ENCODE measurements at regions of chr21 and their contacts with region 1.

Region 1: GRCh38 chr21:33924079-33924765 is 8.6 kb upstream of the ATP5PO start:
- DNase-seq: peak; percentile 77
- H3K4me3 Mint-ChIP-seq: no peak overlapping the region
- H3K27ac Mint-ChIP-seq: no peak overlapping the region
- H3K4me1 Mint-ChIP-seq: peaks cover 14% of the 10 kb centered on the region
- H3K27me3 Mint-ChIP-seq: no peaks in the 10 kb centered on the region

Region 2: GRCh38 chr21:33101300-33102005 is 822.8 kb before region 1 on chr21:
- intact Hi-C with region 1: no loop called
- DNase-seq: no peak
- H3K4me3 Mint-ChIP-seq: no peak overlapping the region
- H3K27ac Mint-ChIP-seq: no peak overlapping the region
- H3K4me1 Mint-ChIP-seq: no peaks in the 10 kb centered on the region
- H3K27me3 Mint-ChIP-seq: peaks cover 24% of the 10 kb centered on the region

Region 3: GRCh38 chr21:34078915-34079314 is 154.7 kb after region 1 on chr21:
- intact Hi-C with region 1: loop called (anchors 2 kb)
- DNase-seq: no peak
- H3K4me3 Mint-ChIP-seq: peak overlapping the region; percentile 64
- H3K27ac Mint-ChIP-seq: peak overlapping the region; percentile 73
- H3K4me1 Mint-ChIP-seq: peaks cover 86% of the 10 kb centered on the region
- H3K27me3 Mint-ChIP-seq: no peaks in the 10 kb centered on the region

Region 4: DNA sequence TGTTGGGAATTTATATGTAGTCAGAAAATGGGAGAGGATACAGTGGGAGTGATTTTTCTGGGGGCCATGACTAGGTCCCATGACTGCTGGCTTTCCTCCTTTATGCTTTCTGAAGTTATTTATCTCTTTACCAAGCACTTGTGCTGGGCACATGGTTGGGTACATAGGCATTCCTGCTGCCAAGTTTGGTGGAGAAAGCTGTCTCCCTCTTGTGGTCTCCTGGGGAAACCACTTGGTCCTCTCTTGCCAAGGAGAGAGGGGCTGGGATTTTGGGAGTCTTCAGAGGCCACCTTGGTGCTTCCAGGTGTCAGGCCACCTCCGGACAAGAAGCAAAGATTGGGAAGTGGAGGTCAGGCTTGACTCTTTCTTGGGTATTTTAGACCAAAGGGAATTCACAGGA is 319.3 kb after region 1 on chr21:
- intact Hi-C with region 1: loop called (anchors 2 kb)
- DNase-seq: no peak
- H3K4me3 Mint-ChIP-seq: no peak overlapping the region
- H3K27ac Mint-ChIP-seq: no peak overlapping the region
- H3K4me1 Mint-ChIP-seq: no peaks in the 10 kb centered on the region
- H3K27me3 Mint-ChIP-seq: no peaks in the 10 kb centered on the region

Region 5: DNA sequence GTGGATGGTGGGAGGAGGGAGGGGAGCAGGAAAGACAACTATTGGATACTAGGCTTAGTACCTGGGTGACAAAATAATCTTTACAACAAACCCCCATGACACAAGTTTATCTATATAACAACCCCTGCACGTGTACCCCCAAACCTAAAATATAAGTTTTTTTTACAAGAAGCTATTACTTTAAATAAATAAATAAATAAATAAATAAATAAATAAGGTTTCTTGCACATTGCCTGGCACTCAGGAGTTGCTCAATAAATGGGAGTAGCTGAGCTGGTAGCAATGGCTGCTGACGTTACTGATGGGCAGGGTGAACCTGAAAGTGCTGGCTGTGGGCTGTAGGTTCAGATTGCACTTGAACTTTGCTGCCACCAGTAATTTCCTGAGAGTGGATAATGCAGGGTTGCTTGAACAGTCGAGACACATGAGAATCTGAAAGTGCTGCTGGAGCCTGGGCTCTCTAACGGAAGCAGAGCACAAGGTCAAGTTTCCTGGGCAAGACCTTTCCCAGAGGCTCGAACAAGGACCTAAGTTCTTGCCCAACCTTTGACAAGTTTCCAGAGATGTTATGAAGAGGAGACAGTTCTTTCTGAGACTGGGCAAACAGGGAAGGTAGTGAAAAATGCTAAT is 424.8 kb after region 1 on chr21:
- intact Hi-C with region 1: loop called (anchors 2 kb)
- DNase-seq: no peak
- H3K4me3 Mint-ChIP-seq: no peak overlapping the region
- H3K27ac Mint-ChIP-seq: no peak overlapping the region
- H3K4me1 Mint-ChIP-seq: peaks cover 9% of the 10 kb centered on the region
- H3K27me3 Mint-ChIP-seq: peaks cover 9% of the 10 kb centered on the region

Measured in activated T-helper 2 cell treated with anti-CD3 and anti-CD28 coated beads, Interferon-gamma antibody, Interleukin-2, Interleukin-4, amounts not matched to agents 10 μg/mL and 5 μg/mL and 100 μg/mL, durations not matched to agents 14 hours and 24 hours and 36 hours (primary cell).